Naive thymus-derived CD8-positive, alpha-beta T cell (primary cell): ENCODE measurements at regions of chr20 and their contacts with region 1.

Region 1: DNA sequence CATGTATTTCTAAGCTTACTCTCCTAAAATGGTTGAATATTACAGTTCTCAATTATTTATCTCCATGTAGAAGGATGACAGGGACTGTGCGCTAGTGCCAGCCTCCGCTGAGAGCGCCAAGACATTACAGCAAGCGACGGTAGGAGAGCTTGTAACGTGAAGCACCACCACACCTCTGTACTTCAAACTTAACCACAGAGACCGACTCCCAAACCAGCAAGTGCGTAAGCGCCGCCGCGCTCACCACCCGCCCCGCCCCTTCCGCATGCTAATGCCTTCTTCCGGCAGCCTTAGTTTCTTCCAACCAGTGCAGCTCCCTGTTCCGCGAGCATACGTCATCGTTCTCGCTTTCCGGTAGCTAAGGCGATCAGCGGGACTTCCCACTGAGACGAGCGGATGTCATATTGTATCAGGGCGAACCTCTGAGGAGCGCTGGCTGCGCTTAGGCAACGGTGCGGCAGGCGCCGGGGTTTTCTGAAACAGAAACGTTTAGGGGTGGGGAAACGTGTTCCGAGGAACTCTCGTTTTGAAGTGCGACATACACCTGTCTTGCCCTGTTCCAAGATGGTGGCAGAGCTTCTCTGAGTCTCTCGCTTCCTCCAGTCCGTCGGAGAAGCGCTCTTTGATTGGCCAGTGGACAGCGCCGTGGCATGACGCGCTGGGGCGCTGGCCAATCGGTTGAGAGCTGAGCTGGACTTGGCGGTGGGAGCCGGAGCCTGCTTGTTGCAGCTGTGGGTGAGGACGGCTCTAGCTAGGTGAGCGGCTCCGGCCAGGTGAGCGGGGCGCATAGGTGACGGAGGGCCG is at the start of gene SEC23B:
- DNase-seq: peak; percentile 90 to 100 (median 99)
- ATAC-seq: peak; percentile 83 to 90
- H3K4me3 Mint-ChIP-seq: peak within 1 kb of the TSS; percentile 93 to 100 (median 99)
- H3K27ac Mint-ChIP-seq: peak within 1 kb of the TSS; percentile 99 to 100 (median 100)
- H3K4me1 Mint-ChIP-seq: peaks cover 20 to 53% (median 48%) of the 10 kb centered on the region in 4 donors
- H3K27me3 Mint-ChIP-seq: peaks cover under 1 to 8% (median 1%) of the 10 kb centered on the region in 5 donors
- polyA plus RNA-seq, gene SEC23B: 31.9 to 45.1 (median 37.9) TPM

Region 2: DNA sequence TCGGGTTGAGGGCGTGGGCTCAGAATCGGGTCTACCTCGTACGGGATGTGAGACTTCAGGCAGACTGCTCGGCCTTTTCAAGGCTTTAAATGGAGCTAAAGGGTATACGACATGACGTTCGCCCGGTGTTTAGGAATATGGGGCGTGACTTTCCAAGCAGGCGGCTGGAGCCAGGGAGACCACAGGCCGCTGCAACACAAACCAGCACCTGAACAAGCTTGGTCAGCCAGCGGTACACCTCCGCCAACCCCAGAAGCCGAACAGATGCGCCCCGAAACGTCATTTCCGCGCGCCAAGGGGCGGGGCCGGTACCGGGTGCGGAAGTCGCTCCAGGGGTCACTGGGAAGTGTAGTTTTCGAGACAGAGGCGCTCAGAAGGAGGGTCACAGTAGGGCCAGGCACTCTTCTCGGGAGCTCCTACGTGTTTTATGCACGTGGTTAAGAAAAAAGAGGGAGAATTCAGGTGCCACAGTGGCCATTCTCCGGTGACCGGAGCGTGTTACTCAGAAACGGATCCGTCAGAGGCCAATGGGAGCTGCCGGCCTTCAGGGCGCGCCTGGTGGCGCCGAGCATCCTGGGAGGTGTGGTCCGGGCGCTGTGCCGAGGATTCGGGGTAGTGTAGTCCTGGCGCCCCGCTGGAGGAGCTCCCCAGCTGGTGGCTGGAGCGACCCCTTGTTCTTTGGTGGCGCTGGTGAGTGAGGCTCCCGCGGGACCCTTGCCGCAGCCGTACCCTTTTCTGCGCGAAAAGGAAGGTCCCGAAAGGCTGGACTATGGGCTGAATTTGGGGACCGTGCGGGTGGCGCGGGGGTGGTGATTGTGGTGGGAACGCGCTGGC is 219.3 kb before region 1 on chr20 and contains the start of gene ZNF133:
- POLR2A ChIA-PET with region 1: interaction called, 14 read pairs
- DNase-seq: peak; percentile 91 to 100 (median 96)
- ATAC-seq: peak; percentile 93 to 95
- H3K4me3 Mint-ChIP-seq: peak within 1 kb of the TSS; percentile 93 to 99 (median 98)
- H3K27ac Mint-ChIP-seq: peak within 1 kb of the TSS; percentile 97 to 100 (median 100)
- H3K4me1 Mint-ChIP-seq: peaks cover 28 to 62% (median 33%) of the 10 kb centered on the region in 4 donors
- H3K27me3 Mint-ChIP-seq: peaks cover 10 to 28% (median 19%) of the 10 kb centered on the region in 5 donors
- polyA plus RNA-seq, gene ZNF133: 4.3 to 6.8 (median 6.7) TPM

Region 3: GRCh38 chr20:18451195-18451594 is 56.2 kb before region 1 on chr20:
- POLR2A ChIA-PET with region 1: no interaction called
- DNase-seq: no peak
- ATAC-seq: no peak
- H3K4me3 Mint-ChIP-seq: no peak overlapping the region
- H3K27ac Mint-ChIP-seq: no peak overlapping the region
- H3K4me1 Mint-ChIP-seq: no peaks in the 10 kb centered on the region
- H3K27me3 Mint-ChIP-seq: no peaks in the 10 kb centered on the region

Region 4: DNA sequence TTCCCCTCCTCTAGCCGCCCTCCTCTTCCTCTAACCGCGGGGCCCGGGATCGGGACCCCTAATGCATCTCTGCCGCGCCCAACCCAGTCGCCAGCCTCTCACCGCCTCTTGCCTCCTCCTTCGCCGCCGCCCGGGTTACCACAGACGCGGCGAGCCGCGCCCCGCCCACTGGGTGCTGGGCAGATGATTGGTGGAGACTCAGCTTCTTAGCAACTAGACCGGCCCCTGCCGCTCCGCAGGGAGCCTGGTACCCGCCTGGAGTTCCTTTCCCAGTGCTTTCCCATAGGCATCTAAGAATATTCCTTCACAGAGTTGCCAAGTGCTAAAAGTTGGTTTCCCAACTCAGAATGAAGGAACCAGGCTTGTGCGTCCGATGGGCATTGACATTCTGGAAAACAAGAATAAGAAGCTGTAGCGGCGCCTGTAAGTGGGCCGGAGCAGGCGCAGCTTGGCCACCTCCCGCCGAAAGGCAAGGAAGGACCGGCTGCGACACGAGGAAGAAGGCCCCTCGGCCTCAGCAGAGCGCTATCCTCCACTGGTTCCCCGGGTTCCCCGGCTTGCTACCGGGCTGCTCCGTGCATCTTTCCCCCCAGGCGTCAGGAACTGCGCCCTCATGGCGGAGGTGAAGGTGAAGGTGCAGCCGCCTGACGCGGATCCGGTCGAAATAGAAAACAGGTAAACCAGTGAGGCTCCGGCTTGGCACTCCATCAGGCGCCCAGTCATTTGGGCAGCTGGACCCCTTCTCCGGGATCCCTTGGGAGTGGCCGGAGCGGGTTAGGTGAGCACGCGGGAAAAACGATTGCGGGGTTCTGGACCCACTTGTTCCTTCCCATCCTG is 40.3 kb before region 1 on chr20 and contains the starts of genes DZANK1 and POLR3F:
- POLR2A ChIA-PET with region 1: interaction called, 49 read pairs
- DNase-seq: peak; percentile 85 to 96 (median 90)
- ATAC-seq: peak; percentile 92 to 96
- H3K4me3 Mint-ChIP-seq: peak within 1 kb of the TSS; percentile 90 to 100 (median 97)
- H3K27ac Mint-ChIP-seq: peak within 1 kb of the TSS; percentile 95 to 99 (median 97)
- H3K4me1 Mint-ChIP-seq: peaks cover 8 to 34% (median 28%) of the 10 kb centered on the region in 4 donors
- H3K27me3 Mint-ChIP-seq: no peaks in the 10 kb centered on the region
- polyA plus RNA-seq, gene DZANK1: 0.74 to 1.3 (median 0.87) TPM
- polyA plus RNA-seq, gene POLR3F: 5.2 to 9.3 (median 7.6) TPM

Region 5: GRCh38 chr20:18496740-18497592 is 10.5 kb before region 1 on chr20 and contains the start of gene RBBP9:
- POLR2A ChIA-PET with region 1: interaction called, 94 read pairs
- DNase-seq: peak; percentile 54 to 86 (median 69)
- ATAC-seq: peak; percentile 98 to 99
- H3K4me3 Mint-ChIP-seq: peak within 1 kb of the TSS; percentile 95 to 99 (median 97)
- H3K27ac Mint-ChIP-seq: peak within 1 kb of the TSS; percentile 61 to 98 (median 95)
- H3K4me1 Mint-ChIP-seq: peaks cover 11 to 19% (median 14%) of the 10 kb centered on the region in 4 donors
- H3K27me3 Mint-ChIP-seq: peaks cover 2 to 6% (median 3%) of the 10 kb centered on the region in 5 donors
- polyA plus RNA-seq, gene RBBP9: 7.6 to 9.9 (median 8.8) TPM

Region 6: DNA sequence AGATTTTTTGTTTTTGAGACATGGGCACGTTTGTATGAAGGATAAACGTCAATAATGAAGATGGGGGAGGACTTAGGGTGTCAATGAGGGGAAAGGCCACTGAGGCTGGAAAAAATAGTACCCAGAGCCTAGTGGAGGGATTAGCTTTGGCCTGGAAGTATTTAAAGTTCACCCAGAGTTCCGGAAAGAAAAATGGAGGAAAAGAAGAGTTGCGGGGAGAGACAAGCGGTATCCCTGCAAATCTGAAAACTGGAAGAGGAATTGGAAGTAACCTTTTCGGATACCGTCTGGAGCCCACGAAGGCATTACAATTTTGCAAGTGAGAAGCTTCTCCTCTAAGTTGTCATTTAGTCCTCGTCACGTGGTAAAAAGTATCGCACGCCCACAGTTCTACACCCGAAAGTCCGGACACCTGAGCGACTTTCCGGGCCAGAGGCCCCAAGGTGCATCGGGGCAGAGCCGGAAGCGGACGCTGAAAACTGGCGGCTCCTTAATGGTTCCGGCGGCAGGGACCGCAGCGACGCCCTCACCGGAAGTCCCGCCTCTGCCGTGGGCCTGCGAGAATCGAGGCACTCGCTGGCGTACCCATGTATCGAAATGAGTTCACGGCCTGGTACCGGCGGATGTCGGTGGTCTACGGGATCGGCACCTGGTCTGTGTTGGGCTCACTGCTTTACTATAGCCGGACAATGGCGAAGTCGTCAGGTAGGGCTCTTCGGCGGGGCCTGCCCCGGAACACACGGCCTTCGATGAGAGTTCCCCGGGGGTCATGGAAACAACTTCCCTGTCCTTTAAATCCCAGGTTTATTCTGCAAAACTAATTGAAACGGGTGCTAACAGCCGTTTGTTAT is 59.7 kb after region 1 on chr20 and contains the start of gene SMIM26:
- POLR2A ChIA-PET with region 1: interaction called, 33 read pairs
- DNase-seq: peak; percentile 85 to 96 (median 92)
- ATAC-seq: peak; percentile 97 to 99
- H3K4me3 Mint-ChIP-seq: peak within 1 kb of the TSS; percentile 84 to 98 (median 97)
- H3K27ac Mint-ChIP-seq: peak within 1 kb of the TSS; percentile 97 to 100 (median 99)
- H3K4me1 Mint-ChIP-seq: peaks cover 9 to 29% (median 23%) of the 10 kb centered on the region in 4 donors
- H3K27me3 Mint-ChIP-seq: no peaks in the 10 kb centered on the region
- polyA plus RNA-seq, gene SMIM26: 177 to 230 (median 185) TPM